Activated CD4-positive, alpha-beta memory T cell treated with anti-CD3 and anti-CD28 coated beads for 36 hours (primary cell): ENCODE measurements at regions of chr7 and their contacts with region 1.

Region 1: DNA sequence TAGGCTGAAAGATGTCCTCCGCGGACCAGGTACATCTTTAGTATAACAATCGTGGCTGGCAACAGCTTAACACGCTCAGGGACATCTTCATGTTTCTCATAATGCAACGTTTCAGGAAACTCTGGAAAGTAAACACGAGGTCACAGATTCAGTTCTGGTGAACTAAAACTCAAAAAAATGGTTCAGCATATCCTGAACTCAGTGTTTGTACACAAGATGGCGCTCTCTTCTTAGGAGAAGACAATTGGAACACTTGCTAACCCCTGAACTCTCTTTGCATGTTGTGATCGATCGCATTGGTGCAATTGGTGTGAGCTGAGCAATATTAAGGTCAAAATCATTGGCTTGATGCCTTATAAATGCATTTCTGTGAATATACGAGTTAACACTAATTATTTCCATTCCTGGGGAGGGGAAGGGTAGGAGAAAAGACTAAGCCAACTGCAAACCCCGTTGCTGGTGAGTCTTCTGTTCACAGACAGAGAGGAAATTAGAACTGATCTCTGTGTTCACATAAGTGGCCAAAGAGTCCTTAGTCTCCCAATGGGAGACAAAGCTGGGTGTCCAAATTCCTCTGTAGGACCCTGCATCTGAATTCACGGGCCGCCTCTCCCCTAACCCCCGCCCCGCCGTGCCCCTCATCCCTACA is 52.6 kb upstream of the FAM180A start:
- DNase-seq: no peak
- H3K4me3 Mint-ChIP-seq: no peak overlapping the region
- H3K27ac Mint-ChIP-seq: no peak overlapping the region
- H3K4me1 Mint-ChIP-seq: peaks cover 7% of the 10 kb centered on the region
- H3K27me3 Mint-ChIP-seq: peaks cover 14% of the 10 kb centered on the region

Region 2: DNA sequence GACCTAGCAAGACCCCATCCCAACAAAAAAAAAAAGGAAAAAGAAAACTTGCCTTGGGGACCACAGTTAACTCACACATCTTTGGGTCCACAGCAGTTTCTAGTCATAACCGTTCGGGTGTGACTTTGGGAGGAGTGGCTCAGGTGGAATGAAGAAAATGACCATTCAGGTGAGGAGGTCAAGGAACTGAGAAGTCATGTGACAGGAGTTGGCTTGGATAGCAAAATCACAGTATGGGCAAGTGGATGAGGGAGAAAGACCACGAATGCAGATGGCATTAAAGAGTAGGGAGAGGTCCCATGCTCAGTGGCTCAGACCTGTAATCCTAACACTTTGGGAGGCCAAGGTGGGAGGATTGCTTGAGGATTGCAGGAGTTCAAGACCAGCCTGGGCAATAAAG is 274.1 kb before region 1 on chr7:
- CTCF ChIA-PET with region 1: no interaction called
- POLR2A ChIA-PET with region 1: no interaction called
- intact Hi-C with region 1: no loop called
- DNase-seq: no peak
- H3K4me3 Mint-ChIP-seq: no peak overlapping the region
- H3K27ac Mint-ChIP-seq: no peak overlapping the region
- H3K4me1 Mint-ChIP-seq: no peaks in the 10 kb centered on the region
- H3K27me3 Mint-ChIP-seq: no peaks in the 10 kb centered on the region

Region 3: DNA sequence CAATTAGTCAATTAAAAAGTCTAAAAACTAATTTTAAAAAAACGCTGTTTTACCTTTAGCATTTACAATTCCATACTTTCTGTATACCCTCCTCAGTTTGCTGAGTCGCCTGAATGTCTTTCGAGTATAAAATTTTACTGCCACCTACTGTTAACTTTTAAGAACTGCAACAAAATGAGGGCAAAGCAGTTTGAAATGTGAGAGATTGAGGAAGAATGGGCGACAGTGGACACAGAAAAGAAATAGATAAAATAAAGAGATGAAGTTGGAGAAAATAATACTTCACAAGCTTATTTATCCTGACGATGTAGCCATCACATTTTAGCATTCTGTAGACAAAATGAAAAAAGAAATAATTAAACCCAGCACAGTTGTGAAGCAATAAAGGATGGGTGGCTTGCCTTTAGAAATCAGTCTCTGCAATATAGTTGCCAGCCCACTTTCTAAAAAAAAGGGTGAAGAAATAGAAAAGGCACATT is 1653.1 kb after region 1 on chr7:
- CTCF ChIA-PET with region 1: interaction called, 3 read pairs
- POLR2A ChIA-PET with region 1: no interaction called
- intact Hi-C with region 1: loop called (anchors 2 kb)
- DNase-seq: no peak
- H3K4me3 Mint-ChIP-seq: no peak overlapping the region
- H3K27ac Mint-ChIP-seq: no peak overlapping the region
- H3K4me1 Mint-ChIP-seq: no peaks in the 10 kb centered on the region
- H3K27me3 Mint-ChIP-seq: no peaks in the 10 kb centered on the region